Natural killer cell (primary cell): ENCODE measurements at regions of chr22 and their contacts with region 1.

Region 1: DNA sequence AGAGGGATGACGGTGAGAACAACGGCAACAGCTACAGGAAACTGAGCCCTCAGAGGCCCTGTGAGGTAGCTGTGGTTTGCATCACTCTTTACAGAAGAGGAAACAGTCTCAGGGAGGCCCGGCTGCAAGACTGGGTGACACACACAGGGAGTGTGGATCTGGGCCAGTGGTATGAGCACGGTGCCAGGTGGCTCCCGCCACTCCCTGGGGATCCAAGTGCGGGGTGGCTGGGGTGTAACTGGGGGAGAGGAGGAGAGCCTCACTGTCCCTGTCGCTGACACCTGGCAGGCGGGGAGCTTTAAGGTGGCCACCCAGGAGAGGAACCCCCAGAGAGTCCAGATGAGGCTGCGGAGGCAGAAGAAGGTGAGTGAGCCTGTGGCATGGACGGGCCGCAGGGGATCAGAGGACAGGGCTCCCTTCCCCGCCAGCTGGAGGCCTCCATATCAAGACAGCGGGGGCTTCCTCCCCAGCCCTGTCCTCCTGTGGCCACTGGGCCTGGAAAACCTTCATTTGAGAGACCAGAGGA is 5.6 kb downstream of the RGL4 start:
- DNase-seq: peak; percentile 63 to 91
- ATAC-seq: peak; percentile 97 to 99 (median 98)
- H3K4me3 ChIP-seq: peak overlapping the region; percentile 29
- H3K4me3 Mint-ChIP-seq: peak overlapping the region; percentile 97
- H3K27ac ChIP-seq: peak overlapping the region; percentile 97
- H3K27ac Mint-ChIP-seq: peak overlapping the region; percentile 100
- H3K4me1 ChIP-seq: peaks cover 35% of the 10 kb centered on the region
- H3K4me1 Mint-ChIP-seq: peaks cover 35% of the 10 kb centered on the region in 2 donors
- H3K27me3 ChIP-seq: no peaks in the 10 kb centered on the region
- H3K27me3 Mint-ChIP-seq: no peaks in the 10 kb centered on the region
- CTCF ChIP-seq: no peak

Region 2: DNA sequence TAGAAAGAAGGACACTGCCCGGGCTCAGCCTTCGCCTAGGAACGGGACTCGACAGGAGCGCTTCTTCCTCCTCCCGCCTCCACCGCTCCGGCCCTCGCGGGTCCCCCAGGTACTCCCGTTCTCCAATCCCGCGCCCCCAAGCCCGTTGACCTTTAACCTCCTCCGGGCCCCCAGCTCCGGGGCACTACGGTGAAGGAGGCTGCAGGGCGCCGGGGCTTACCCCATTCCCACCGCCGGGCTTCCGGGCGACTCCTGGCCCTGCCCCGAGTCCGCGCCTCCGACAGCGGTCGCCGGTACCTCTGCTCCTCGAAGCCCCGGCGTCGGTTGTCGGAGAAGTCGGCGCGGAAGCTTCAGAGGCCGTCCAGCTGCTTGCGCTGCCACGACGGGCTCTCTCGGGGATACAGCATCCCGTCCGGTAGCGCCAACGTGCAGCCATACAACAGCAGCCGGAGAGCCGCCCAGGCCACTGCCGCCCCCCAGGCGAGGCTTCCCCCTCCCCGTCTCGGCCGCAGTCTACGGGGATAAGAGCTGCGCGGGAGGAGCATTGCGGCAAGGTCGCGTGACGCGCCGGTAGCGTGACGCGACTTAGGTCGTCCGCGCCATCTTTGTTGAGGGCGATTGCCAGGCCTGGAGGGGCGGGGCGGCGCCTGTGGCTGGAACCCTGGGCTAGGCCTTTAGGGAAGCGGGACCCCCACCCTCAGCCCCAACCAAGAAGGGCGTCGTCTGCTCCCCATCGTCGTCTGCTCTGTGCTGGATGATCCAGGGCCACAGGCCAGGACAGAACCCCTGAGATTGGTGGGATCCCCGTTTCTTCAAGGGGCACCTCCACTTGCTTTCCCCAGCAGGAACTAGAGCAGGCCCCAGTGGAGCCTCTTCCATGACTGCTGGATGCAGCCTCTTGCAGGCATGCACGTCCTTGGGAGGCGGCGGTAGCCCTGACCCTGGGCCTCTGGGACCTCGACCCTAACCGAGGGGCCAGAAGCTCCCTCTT is 20.7 kb after region 1 on chr22:
- intact Hi-C with region 1: loop called (anchors 2 kb)
- DNase-seq: peak; percentile 77 to 91
- ATAC-seq: peak; percentile 94 to 96 (median 95)
- H3K4me3 ChIP-seq: peak overlapping the region; percentile 79
- H3K4me3 Mint-ChIP-seq: peak overlapping the region; percentile 82
- H3K27ac ChIP-seq: peak overlapping the region; percentile 68
- H3K27ac Mint-ChIP-seq: peak overlapping the region; percentile 75 to 88
- H3K4me1 ChIP-seq: peaks cover 25% of the 10 kb centered on the region
- H3K4me1 Mint-ChIP-seq: peaks cover 16 to 26% of the 10 kb centered on the region in 2 donors
- H3K27me3 ChIP-seq: no peaks in the 10 kb centered on the region
- H3K27me3 Mint-ChIP-seq: no peaks in the 10 kb centered on the region
- CTCF ChIP-seq: no peak

Region 3: GRCh38 chr22:23750714-23751440 is 54.5 kb after region 1 on chr22 and contains the start of gene ZNF70:
- intact Hi-C with region 1: no loop called
- DNase-seq: peak; percentile 86 to 94
- ATAC-seq: peak; percentile 97 to 99 (median 98)
- H3K4me3 ChIP-seq: peak within 1 kb of the TSS; percentile 58
- H3K4me3 Mint-ChIP-seq: peak within 1 kb of the TSS; percentile 92
- H3K27ac ChIP-seq: peak within 1 kb of the TSS; percentile 75
- H3K27ac Mint-ChIP-seq: peak within 1 kb of the TSS; percentile 82 to 91
- H3K4me1 ChIP-seq: peaks cover 26% of the 10 kb centered on the region
- H3K4me1 Mint-ChIP-seq: peaks cover 20 to 28% of the 10 kb centered on the region in 2 donors
- H3K27me3 ChIP-seq: no peaks in the 10 kb centered on the region
- H3K27me3 Mint-ChIP-seq: no peaks in the 10 kb centered on the region
- CTCF ChIP-seq: no peak
- total RNA-seq, gene ZNF70: 7.4 to 9.1 (median 7.7) TPM

Region 4: DNA sequence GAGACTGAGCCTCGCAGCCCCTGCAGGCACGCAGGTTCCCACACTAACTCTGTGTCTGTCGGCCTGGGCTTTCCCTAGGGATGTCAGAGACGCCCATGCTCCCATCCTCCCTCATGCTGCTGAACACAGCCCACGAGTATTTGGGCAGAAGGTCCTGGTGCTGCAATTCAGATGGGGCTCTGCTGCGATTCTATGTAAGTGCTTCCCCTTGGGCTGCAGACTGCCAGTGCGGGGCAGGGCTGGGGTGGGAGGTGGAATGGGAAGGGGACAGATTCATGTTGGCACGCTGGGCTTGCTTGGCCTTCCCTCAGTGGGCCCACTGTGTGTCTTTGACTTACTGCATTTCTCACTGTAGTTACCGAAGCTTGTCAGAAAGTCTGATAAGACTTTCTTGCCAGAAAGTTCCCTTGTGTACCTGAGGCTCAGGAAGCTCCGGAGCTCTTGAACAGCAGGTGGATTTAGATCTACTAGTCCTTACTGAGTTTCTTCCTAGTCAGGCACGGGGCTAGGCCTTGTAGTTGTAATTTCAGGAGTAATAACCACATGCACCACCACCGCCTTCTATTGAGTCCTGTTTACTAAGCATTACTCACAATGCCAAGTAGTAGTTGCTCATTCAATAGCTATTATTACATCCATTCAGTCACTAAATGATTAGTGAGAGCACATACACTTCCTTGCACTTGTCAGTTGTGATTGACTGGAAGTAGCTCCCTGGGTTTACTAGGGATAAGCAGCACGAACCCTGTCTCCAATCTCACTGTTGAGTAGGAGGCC is 379.9 kb after region 1 on chr22:
- intact Hi-C with region 1: no loop called
- DNase-seq: no peak
- ATAC-seq: no peak
- H3K4me3 ChIP-seq: no peak overlapping the region
- H3K4me3 Mint-ChIP-seq: no peak overlapping the region
- H3K27ac ChIP-seq: no peak overlapping the region
- H3K27ac Mint-ChIP-seq: no peak overlapping the region
- H3K4me1 ChIP-seq: no peaks in the 10 kb centered on the region
- H3K4me1 Mint-ChIP-seq: no peaks in the 10 kb centered on the region
- H3K27me3 ChIP-seq: no peaks in the 10 kb centered on the region
- H3K27me3 Mint-ChIP-seq: no peaks in the 10 kb centered on the region
- CTCF ChIP-seq: no peak